ENCODE measurements at regions of chr10 and their contacts with region 1.

Region 1: GRCh38 chr10:63416376-63416775 is 49.4 kb downstream of the JMJD1C start:
- DNase-seq: peak; percentile 22
- H3K4me3 ChIP-seq: no peak overlapping the region
- H3K27ac ChIP-seq: no peak overlapping the region
- H3K4me1 ChIP-seq: peaks cover 29% of the 10 kb centered on the region
- H3K27me3 ChIP-seq: no peaks in the 10 kb centered on the region
- CTCF ChIP-seq: no peak
- POLR2A ChIP-seq: no peak

Region 2: GRCh38 chr10:63192826-63193225 is 223.6 kb before region 1 on chr10:
- CTCF ChIA-PET with region 1: no interaction called
- POLR2A ChIA-PET with region 1: interaction called, 12 read pairs
- dilution Hi-C with region 1: no loop called
- intact Hi-C with region 1: no loop called
- DNase-seq: no peak
- H3K4me3 ChIP-seq: no peak overlapping the region
- H3K27ac ChIP-seq: no peak overlapping the region
- H3K4me1 ChIP-seq: no peaks in the 10 kb centered on the region
- H3K27me3 ChIP-seq: no peaks in the 10 kb centered on the region
- CTCF ChIP-seq: no peak
- POLR2A ChIP-seq: no peak

Region 3: GRCh38 chr10:63331586-63331985 is 84.8 kb before region 1 on chr10:
- CTCF ChIA-PET with region 1: no interaction called
- POLR2A ChIA-PET with region 1: no interaction called
- dilution Hi-C with region 1: no loop called
- intact Hi-C with region 1: no loop called
- DNase-seq: no peak
- H3K4me3 ChIP-seq: no peak overlapping the region
- H3K27ac ChIP-seq: no peak overlapping the region
- H3K4me1 ChIP-seq: no peaks in the 10 kb centered on the region
- H3K27me3 ChIP-seq: no peaks in the 10 kb centered on the region
- CTCF ChIP-seq: no peak
- POLR2A ChIP-seq: no peak

Region 4: DNA sequence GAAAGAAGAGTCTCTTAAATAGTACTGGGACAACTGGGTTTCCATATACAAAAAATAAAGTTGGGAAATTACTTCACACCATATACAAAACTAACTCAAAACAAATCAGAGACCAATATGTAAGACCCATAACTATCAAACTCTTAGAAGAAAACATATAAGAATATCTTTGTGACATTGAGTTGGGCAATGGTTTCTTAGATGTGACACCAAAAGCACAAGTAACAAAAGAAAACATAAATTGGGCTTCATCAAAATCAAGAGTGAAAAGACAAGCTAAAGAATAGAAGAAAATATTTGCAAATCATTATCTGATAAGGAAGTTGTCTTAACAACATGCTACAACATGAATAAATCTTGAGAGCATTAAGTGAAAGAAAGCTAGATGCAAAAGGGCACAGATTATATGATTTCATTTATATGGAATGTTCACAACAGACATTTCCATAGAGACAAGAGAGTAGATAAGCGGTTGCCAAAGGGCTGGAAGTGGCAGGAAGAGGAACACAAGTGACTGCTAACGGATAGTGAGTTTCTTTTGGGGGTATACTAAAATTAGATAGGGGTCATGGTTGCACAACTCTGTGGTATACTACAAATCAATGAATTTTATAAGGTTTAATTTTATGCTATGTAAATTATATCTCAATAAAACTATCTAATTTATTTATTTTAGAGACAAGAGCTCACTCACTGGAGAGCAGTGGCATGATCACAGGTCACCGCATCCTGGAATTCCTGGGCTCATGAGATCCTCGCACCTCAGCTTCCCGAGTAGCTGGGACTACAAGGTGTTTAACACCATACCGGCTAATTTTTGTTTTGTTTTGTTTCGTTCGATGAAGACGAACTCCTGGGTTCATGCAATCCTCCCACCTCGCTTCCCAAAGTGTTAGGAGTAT is 14.0 kb after region 1 on chr10:
- CTCF ChIA-PET with region 1: interaction called, 6 read pairs
- POLR2A ChIA-PET with region 1: no interaction called
- dilution Hi-C with region 1: no loop called
- intact Hi-C with region 1: loop called (anchors 2 kb)
- DNase-seq: peak; percentile 83
- H3K4me3 ChIP-seq: no peak overlapping the region
- H3K27ac ChIP-seq: peak overlapping the region; percentile 92
- H3K4me1 ChIP-seq: peaks cover 55% of the 10 kb centered on the region
- H3K27me3 ChIP-seq: no peaks in the 10 kb centered on the region
- CTCF ChIP-seq: no peak
- POLR2A ChIP-seq: no peak

Region 5: DNA sequence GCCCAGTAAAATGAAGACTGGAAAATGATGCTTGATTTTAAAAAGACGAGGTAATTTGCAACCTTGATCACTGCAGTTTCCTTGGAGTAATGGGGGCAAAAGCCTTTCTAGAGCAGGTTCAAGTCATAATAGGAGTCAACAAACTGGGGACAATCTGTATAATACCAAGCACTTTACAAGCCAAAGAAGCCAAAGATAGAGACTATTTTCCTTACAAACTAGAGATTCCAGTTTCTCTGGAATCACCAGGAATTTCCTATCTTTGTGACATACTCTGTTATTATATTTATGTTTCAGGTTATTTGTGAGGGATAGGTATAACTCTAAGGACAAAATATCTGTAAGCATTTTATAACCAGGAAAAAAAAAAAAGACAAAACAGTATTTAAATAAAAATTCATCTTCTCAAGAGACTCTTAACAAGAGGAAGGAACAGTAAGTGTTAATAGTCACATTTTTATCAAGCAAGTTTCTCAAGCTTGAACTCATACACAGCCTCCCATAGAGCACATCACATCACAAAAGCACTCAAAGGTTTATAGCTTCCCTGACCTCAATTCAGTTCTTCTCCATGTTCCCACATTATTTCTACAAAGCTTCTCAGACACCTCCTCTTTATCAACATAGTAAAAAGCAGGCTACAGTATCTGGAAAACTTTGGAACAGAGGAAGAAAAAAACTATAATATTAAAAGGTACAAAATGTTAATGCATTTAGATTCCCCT is 30.5 kb after region 1 on chr10:
- CTCF ChIA-PET with region 1: no interaction called
- POLR2A ChIA-PET with region 1: no interaction called
- dilution Hi-C with region 1: no loop called
- intact Hi-C with region 1: no loop called
- DNase-seq: no peak
- H3K4me3 ChIP-seq: no peak overlapping the region
- H3K27ac ChIP-seq: no peak overlapping the region
- H3K4me1 ChIP-seq: peaks cover under 1% of the 10 kb centered on the region
- H3K27me3 ChIP-seq: no peaks in the 10 kb centered on the region
- CTCF ChIP-seq: no peak
- POLR2A ChIP-seq: no peak

Measured in endothelial cell of umbilical vein (primary cell).